CD8-positive, alpha-beta memory T cell (primary cell): ENCODE measurements at regions of chr2 and their contacts with region 1.

Region 1: GRCh38 chr2:143259368-143259958 is 130.2 kb downstream of the ARHGAP15 start:
- DNase-seq: peak; percentile 50 to 80 (median 62)
- H3K4me3 ChIP-seq: peak overlapping the region; percentile 37
- H3K4me3 Mint-ChIP-seq: peak overlapping the region; percentile 9 to 84 (median 81)
- H3K27ac ChIP-seq: no peak overlapping the region
- H3K27ac Mint-ChIP-seq: peak overlapping the region; percentile 64 to 93 (median 85)
- H3K4me1 ChIP-seq: peaks cover 96% of the 10 kb centered on the region
- H3K4me1 Mint-ChIP-seq: peaks cover 79 to 97% (median 90%) of the 10 kb centered on the region in 3 donors
- H3K27me3 ChIP-seq: no peaks in the 10 kb centered on the region
- H3K27me3 Mint-ChIP-seq: no peaks in the 10 kb centered on the region

Region 2: GRCh38 chr2:143110758-143111428 is 148.6 kb before region 1 on chr2:
- CTCF ChIA-PET with region 1: interaction called, 70 read pairs
- POLR2A ChIA-PET with region 1: interaction called, 3 read pairs
- DNase-seq: peak; percentile 41 to 75 (median 58)
- H3K4me3 ChIP-seq: no peak overlapping the region
- H3K4me3 Mint-ChIP-seq: peak overlapping the region in 5 of 7 donors; percentile 4 to 51 (median 36)
- H3K27ac ChIP-seq: no peak overlapping the region
- H3K27ac Mint-ChIP-seq: peak overlapping the region in 7 of 8 donors; percentile 48 to 84 (median 74)
- H3K4me1 ChIP-seq: peaks cover 15% of the 10 kb centered on the region
- H3K4me1 Mint-ChIP-seq: peaks cover 10 to 28% (median 16%) of the 10 kb centered on the region in 3 donors
- H3K27me3 ChIP-seq: no peaks in the 10 kb centered on the region
- H3K27me3 Mint-ChIP-seq: no peaks in the 10 kb centered on the region

Region 3: DNA sequence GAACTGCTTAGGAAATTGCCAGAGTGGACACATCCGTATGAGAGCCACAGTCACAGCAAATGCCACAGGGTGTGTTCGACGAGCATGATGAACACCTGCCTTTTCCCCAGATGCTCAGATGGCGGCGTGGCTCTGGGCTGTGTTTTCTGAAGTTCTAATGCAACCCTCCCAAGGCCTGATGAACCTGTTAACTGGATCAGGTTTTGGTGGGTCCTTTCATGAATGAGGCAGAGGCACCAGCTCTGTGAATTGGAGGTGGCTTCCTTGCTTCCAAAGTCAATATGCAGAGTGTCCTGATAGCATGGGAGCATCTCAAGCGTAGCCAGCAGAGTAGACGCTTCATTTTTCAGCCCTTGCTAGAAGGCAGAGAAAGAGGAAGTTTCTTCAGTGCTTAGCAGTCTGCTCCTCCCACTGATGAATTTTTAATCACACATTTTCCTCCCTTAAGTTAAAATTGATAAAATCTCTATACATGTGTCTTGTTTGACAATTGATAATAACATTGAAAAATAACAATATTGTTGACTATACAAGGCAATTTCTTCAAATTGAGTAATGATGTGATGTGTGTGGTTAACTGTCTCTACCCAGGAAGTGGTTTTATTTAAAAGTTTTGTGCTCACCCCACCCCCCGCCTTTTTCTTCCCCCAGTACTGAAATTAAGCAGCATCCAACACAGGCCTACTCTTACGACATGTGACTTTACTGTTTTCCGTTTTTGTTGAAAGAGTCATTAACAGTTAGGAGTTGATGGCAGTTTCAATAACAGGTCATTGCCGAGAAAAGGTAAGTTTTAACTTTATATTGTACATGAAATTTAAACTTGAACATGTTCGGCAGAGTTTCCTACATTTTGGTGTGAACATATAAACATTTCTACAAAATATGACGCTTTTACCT is 130.5 kb before region 1 on chr2 and contains the start of gene ARHGAP15:
- CTCF ChIA-PET with region 1: interaction called, 14 read pairs
- POLR2A ChIA-PET with region 1: interaction called, 4 read pairs
- DNase-seq: peak; percentile 48 to 81 (median 78)
- H3K4me3 ChIP-seq: peak within 1 kb of the TSS; percentile 86
- H3K4me3 Mint-ChIP-seq: peak within 1 kb of the TSS; percentile 73 to 91 (median 83)
- H3K27ac ChIP-seq: peak within 1 kb of the TSS; percentile 81
- H3K27ac Mint-ChIP-seq: peak within 1 kb of the TSS; percentile 77 to 98 (median 94)
- H3K4me1 ChIP-seq: peaks cover 67% of the 10 kb centered on the region
- H3K4me1 Mint-ChIP-seq: peaks cover 35 to 56% (median 52%) of the 10 kb centered on the region in 3 donors
- H3K27me3 ChIP-seq: no peaks in the 10 kb centered on the region
- H3K27me3 Mint-ChIP-seq: no peaks in the 10 kb centered on the region
- total RNA-seq, gene ARHGAP15: 41.3 to 41.4 TPM

Region 4: GRCh38 chr2:143205106-143205764 is 54.2 kb before region 1 on chr2:
- CTCF ChIA-PET with region 1: interaction called, 29 read pairs
- POLR2A ChIA-PET with region 1: no interaction called
- DNase-seq: peak in 2 of 5 donors; percentile 34 to 36
- H3K4me3 ChIP-seq: no peak overlapping the region
- H3K4me3 Mint-ChIP-seq: peak overlapping the region in 2 of 7 donors; percentile 39 to 54
- H3K27ac ChIP-seq: no peak overlapping the region
- H3K27ac Mint-ChIP-seq: peak overlapping the region in 7 of 8 donors; percentile 28 to 90 (median 69)
- H3K4me1 ChIP-seq: peaks cover 36% of the 10 kb centered on the region
- H3K4me1 Mint-ChIP-seq: peaks cover 61 to 76% (median 65%) of the 10 kb centered on the region in 3 donors
- H3K27me3 ChIP-seq: no peaks in the 10 kb centered on the region
- H3K27me3 Mint-ChIP-seq: no peaks in the 10 kb centered on the region

Region 5: DNA sequence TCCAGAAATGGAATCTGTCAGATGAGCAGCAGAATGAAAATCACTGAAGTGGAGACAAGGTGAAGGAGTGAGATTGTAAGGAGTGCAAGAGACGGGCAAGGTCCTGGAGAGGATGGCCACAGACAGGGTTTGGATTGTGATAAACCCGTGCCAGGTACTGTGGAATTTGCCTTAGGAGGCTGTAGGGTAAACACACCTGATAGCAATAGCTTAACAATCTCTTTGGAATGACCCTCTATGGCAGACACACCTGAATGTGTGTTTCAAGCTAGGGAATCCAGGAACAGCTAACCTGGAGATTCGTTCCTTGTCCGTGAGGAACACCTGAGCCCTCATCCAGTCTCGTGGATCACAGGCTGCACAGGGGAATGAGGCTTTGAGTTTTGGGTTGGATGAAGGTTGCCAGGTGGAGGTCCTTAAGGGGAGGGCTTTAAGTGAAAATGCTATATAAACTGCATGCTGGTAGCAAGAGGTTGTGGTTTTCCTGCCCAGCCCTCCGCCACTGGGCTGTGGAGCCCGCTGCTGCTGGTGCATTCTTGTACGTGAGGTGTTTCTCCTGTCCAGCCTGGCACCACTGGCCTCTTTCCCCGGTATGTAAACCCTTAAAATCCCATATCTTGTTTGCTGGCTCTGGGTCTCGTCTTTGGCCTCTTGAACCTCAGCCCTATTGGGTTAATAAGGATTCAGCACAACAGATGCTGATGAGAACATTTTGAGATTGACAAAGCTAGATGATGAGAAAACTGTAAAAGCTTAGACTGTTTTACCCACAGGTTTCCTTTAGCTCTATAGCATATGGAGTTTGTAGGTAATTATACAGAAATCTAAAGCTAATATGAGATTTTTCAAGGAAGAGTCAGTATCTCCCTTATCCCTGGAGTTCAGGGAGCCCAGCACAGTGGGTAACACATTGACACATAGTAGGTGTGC is 12.4 kb before region 1 on chr2:
- CTCF ChIA-PET with region 1: interaction called, 24 read pairs
- POLR2A ChIA-PET with region 1: interaction called, 16 read pairs
- DNase-seq: peak; percentile 11 to 57 (median 28)
- H3K4me3 ChIP-seq: peak overlapping the region; percentile 59
- H3K4me3 Mint-ChIP-seq: no peak overlapping the region
- H3K27ac ChIP-seq: peak overlapping the region; percentile 8
- H3K27ac Mint-ChIP-seq: peak overlapping the region in 1 of 8 donors; percentile 96
- H3K4me1 ChIP-seq: peaks cover 50% of the 10 kb centered on the region
- H3K4me1 Mint-ChIP-seq: peaks cover 27 to 43% (median 39%) of the 10 kb centered on the region in 3 donors
- H3K27me3 ChIP-seq: no peaks in the 10 kb centered on the region
- H3K27me3 Mint-ChIP-seq: no peaks in the 10 kb centered on the region

Region 6: DNA sequence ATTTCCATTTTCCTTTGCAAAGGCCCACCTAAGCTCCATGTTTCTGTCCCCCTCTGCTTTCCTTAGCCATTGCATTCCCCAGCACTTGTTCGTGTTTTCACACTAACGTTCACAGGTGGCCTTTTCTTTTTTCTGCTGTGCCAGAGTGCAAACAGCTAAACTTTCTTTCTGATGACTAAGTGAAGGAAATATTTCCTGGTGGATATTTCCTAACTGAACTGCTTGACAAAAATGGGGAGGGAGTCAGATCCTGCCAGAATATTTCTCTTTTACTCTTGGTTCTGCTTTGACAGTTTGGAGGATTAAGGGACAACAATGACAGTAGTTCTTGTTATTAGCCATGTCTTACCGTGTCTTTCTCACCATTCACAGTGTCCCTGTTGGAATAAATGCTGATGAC is 213.8 kb after region 1 on chr2:
- CTCF ChIA-PET with region 1: no interaction called
- POLR2A ChIA-PET with region 1: no interaction called
- DNase-seq: no peak
- H3K4me3 ChIP-seq: no peak overlapping the region
- H3K4me3 Mint-ChIP-seq: no peak overlapping the region
- H3K27ac ChIP-seq: no peak overlapping the region
- H3K27ac Mint-ChIP-seq: peak overlapping the region in 1 of 8 donors; percentile 11
- H3K4me1 ChIP-seq: no peaks in the 10 kb centered on the region
- H3K4me1 Mint-ChIP-seq: peaks cover 48 to 65% (median 65%) of the 10 kb centered on the region in 3 donors
- H3K27me3 ChIP-seq: no peaks in the 10 kb centered on the region
- H3K27me3 Mint-ChIP-seq: no peaks in the 10 kb centered on the region